ENCODE measurements at regions of chr19 and their contacts with region 1.

Region 1: DNA sequence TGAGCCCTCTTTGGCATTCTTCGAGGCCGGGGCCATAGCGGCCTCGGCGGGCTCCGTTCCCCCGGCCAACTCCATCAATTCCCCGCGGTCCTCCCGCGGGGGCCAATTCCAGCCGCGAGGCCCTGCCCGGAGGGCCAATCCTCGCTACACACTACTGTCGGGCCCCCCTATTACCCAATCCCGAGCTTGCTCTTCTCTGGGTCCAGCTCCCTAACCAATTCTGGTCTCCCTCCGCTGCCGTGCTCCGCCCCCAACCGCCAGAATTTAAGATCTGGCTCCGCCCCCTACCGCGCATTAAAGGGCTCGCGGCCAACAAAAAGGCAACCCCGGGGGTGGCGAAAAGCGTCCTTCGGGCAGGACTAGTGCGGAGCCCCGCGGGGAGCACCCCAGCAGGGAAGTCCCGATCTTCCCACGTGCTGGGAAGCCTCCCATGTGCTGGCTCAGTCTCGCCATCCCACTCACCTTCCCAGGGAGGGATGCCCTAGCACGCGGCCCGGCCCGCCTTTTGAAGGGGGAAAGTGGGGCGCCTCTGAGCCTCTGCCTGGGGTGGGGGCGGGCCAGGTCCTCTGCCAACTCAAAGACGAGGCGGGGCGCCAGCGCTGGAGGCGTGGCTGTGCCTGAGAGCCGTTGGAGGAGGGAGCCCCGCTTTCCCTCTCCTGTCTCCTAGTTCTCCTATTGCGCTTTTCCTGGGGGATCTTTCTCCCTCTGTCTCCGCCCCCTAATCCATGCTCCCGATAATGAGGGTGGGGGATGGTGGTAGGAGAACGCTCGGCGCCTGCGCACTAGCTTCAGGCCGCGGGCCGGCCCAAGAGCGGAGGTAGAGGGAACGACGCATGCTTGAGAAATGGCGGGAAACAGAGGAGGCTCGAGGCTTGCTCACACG is 3.5 kb downstream of the LIPE start:
- DNase-seq: peak; percentile 93 to 95 (median 94)
- H3K4me3 ChIP-seq: peak overlapping the region; percentile 86 to 97
- H3K4me3 Mint-ChIP-seq: peak overlapping the region; percentile 91 to 99 (median 98)
- H3K27ac ChIP-seq: peak overlapping the region; percentile 61
- H3K27ac Mint-ChIP-seq: peak overlapping the region; percentile 88 to 98 (median 95)
- H3K4me1 ChIP-seq: peaks cover 39% of the 10 kb centered on the region
- H3K4me1 Mint-ChIP-seq: peaks cover 28 to 48% (median 37%) of the 10 kb centered on the region in 4 donors
- H3K27me3 ChIP-seq: no peaks in the 10 kb centered on the region
- H3K27me3 Mint-ChIP-seq: no peaks in the 10 kb centered on the region

Region 2: DNA sequence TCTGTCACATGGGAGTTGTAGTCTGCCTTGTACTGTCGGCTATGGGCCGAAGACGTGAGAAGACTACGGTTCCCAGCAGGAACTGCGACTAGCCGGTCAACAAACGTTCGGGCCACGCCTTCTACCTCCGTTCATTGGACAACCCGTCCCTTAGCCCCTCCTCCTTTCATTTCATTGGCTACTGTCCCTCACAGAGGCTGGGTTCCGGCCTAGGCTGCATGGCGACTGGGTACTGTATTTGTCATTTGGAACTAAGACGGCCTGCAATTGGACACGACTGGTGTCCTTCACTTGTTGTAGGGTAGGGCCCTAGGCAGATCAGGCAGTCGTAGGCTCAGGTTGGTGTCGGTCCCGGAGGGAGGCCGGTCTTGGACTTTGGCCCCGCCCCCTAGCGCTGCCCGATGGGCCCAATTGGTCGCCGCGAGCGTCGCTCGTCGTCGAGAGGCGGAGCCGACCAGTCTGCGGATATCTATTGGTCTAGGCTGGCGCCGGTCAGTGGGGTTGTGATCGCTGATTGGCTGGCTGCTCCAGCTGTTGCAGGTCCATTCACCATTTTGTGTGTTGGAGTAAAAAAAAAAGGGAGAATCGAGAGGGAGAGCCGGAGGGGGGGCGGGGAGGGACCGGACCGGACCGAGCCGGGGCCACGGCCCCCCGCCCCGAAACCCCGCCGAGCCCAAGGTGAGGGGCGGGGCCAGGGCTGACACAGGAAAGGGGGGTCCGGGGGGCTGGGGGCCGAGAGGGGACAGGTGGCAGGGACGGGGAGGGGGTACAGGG is 154.8 kb before region 1 on chr19 and contains the start of gene CIC:
- CTCF ChIA-PET with region 1: no interaction called
- POLR2A ChIA-PET with region 1: no interaction called
- intact Hi-C with region 1: loop called (anchors 5 kb)
- DNase-seq: peak; percentile 100
- H3K4me3 ChIP-seq: peak within 1 kb of the TSS; percentile 83 to 96
- H3K4me3 Mint-ChIP-seq: peak within 1 kb of the TSS in 4 of 8 donors; percentile 89 to 94 (median 92)
- H3K27ac ChIP-seq: peak within 1 kb of the TSS; percentile 99
- H3K27ac Mint-ChIP-seq: peak within 1 kb of the TSS in 4 of 7 donors; percentile 96 to 99 (median 98)
- H3K4me1 ChIP-seq: peaks cover 33% of the 10 kb centered on the region
- H3K4me1 Mint-ChIP-seq: peaks cover 0 to 29% (median 26%) of the 10 kb centered on the region in 4 donors
- H3K27me3 ChIP-seq: no peaks in the 10 kb centered on the region
- H3K27me3 Mint-ChIP-seq: no peaks in the 10 kb centered on the region
- total RNA-seq, gene CIC: 81.6 to 82.6 TPM

Region 3: DNA sequence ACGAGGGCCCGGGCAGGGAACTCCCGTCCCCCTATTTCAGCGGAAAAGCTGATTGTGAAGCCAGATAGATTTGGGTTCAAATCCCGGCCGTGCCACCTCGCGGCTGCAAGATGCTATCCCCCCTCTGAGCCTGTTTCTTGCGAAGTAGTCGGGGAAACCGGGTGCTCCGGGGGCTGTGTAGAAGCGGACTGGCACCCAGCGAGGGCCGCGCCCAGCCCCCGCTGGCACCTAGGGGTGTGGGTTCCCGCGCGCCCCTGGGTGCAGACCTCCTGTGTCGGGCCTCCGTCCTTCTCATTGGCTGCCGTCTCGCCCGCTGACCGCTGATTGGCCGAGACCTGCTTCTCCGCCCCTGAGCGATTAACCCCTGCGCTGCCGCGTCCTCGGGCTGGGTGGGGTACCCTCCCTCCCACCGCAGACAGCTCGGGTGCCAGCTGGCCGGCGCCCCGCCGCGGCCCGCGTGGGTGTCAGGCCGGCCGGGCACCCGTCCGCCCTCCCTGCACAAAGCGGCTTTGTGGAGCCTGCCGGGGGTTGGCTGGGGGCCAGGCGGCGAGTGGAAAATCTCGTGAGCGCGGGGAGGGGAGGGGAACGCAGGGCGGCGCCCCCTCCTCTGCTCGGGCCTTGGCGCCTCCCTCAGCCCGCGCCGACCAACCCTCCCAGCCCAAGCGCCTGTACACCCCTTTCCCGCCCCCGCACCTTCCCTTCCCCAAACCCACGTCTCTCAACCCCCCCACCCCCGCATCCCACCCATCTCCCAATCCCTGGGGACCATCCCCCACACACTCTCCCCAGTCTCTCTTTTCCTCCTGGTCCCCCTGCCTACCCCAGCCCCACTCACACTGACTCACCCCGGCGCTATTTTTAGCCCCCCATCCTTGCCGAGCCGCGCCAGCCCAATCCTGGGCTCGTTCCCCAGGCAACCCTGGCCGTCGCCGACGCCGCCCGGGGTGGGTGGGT is 143.2 kb before region 1 on chr19:
- CTCF ChIA-PET with region 1: no interaction called
- POLR2A ChIA-PET with region 1: no interaction called
- intact Hi-C with region 1: no loop called
- DNase-seq: peak; percentile 82 to 87 (median 84)
- H3K4me3 ChIP-seq: peak overlapping the region; percentile 73 to 76
- H3K4me3 Mint-ChIP-seq: peak overlapping the region; percentile 82 to 94 (median 89)
- H3K27ac ChIP-seq: peak overlapping the region; percentile 77
- H3K27ac Mint-ChIP-seq: peak overlapping the region in 6 of 7 donors; percentile 78 to 94 (median 88)
- H3K4me1 ChIP-seq: peaks cover 63% of the 10 kb centered on the region
- H3K4me1 Mint-ChIP-seq: peaks cover 39 to 49% (median 45%) of the 10 kb centered on the region in 4 donors
- H3K27me3 ChIP-seq: no peaks in the 10 kb centered on the region
- H3K27me3 Mint-ChIP-seq: no peaks in the 10 kb centered on the region

Region 4: DNA sequence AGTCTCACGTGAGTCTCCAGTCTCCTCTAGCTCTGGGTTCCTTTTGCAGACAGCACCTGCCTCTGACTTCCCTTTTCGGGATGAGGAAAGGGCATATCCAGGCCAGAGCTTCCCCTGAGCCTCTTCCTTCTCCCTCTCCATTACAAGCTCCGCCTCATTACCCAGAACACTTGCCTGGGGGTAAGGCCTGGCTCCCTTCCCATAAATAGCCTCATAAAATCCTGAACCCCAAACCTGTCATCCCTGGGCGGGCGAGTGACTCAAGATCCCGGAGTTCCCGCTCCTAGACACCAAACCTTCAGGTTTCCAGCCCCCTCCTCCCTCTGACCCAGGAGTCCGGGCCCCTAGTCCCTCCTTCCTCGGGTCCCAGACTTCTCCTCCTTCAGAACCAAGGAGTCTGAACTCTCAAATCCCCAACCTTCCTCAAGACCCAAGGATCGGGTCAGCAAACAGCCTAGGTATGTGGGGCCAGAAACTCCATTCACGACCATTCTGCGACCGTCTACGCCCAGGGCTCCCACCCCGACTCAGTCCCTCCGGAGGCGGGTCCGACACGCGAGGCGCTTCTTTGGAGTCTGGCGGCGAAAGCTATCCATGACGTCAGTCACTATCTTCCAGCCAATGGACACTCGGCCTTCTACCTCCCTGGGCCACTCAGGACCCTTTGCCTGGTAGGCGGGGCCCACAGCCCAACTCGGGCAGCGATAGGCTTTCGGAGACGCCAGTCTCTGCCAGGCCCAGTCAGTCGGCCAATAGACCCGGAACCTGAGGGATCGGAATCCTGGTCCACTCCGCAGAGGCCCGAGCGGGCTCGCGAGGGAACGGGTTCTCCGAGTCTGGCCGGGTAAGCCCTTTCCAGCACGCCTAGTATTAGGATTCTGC is 27.1 kb before region 1 on chr19:
- CTCF ChIA-PET with region 1: interaction called, 13 read pairs
- POLR2A ChIA-PET with region 1: interaction called, 13 read pairs
- intact Hi-C with region 1: loop called (anchors 1 kb)
- DNase-seq: peak; percentile 88 to 93 (median 90)
- H3K4me3 ChIP-seq: peak overlapping the region; percentile 87 to 97
- H3K4me3 Mint-ChIP-seq: peak overlapping the region; percentile 88 to 96 (median 92)
- H3K27ac ChIP-seq: peak overlapping the region; percentile 72
- H3K27ac Mint-ChIP-seq: peak overlapping the region; percentile 77 to 98 (median 96)
- H3K4me1 ChIP-seq: peaks cover 28% of the 10 kb centered on the region
- H3K4me1 Mint-ChIP-seq: peaks cover 26 to 47% (median 40%) of the 10 kb centered on the region in 4 donors
- H3K27me3 ChIP-seq: no peaks in the 10 kb centered on the region
- H3K27me3 Mint-ChIP-seq: peaks cover 0 to 3% of the 10 kb centered on the region in 2 donors

Region 5: DNA sequence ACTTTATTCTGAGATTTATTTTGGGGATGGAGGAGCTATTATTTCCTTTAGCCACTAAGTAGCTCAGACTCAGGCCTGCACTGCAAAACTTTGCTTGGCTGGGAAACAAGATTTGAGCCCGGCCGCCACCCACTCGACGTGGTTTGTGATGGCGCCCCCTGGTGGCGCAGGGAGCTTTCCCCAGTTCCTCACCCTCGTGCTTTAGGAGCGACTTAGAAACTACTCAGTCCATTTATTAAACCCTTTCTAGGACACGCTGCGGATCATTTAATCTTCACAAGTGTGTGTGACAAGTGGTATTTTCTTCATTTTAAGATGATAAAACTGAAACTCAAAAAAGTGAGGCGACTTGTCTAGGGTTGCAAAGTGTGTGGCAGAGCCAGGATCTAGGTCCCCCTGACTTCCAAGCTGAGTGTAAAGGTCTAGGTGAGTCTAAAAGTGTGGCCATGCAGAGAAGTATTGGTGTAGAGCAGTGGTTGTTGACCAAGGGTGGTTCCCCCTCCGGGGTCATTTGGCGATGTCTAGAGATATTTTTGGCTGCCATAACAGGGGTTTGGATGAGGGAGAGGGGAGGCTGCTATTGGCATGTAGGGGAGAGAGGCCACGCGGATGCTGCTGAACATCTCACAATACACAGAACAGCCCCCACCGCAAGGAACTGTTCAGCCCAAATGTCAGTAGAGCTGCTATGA is 16.8 kb after region 1 on chr19:
- CTCF ChIA-PET with region 1: interaction called, 58 read pairs
- POLR2A ChIA-PET with region 1: interaction called, 14 read pairs
- intact Hi-C with region 1: loop called (anchors 1 kb)
- DNase-seq: peak; percentile 71 to 76 (median 74)
- H3K4me3 ChIP-seq: no peak overlapping the region
- H3K4me3 Mint-ChIP-seq: peak overlapping the region in 7 of 8 donors; percentile 15 to 87 (median 62)
- H3K27ac ChIP-seq: no peak overlapping the region
- H3K27ac Mint-ChIP-seq: peak overlapping the region; percentile 28 to 92 (median 79)
- H3K4me1 ChIP-seq: peaks cover 27% of the 10 kb centered on the region
- H3K4me1 Mint-ChIP-seq: peaks cover 21 to 42% (median 33%) of the 10 kb centered on the region in 4 donors
- H3K27me3 ChIP-seq: no peaks in the 10 kb centered on the region
- H3K27me3 Mint-ChIP-seq: no peaks in the 10 kb centered on the region

Measured in CD4-positive, alpha-beta memory T cell (primary cell).